Activated CD8-positive, alpha-beta T cell treated with anti-CD3 and anti-CD28 coated beads for 36 hours (primary cell): ENCODE measurements at regions of chr6 and their contacts with region 1.

Region 1: DNA sequence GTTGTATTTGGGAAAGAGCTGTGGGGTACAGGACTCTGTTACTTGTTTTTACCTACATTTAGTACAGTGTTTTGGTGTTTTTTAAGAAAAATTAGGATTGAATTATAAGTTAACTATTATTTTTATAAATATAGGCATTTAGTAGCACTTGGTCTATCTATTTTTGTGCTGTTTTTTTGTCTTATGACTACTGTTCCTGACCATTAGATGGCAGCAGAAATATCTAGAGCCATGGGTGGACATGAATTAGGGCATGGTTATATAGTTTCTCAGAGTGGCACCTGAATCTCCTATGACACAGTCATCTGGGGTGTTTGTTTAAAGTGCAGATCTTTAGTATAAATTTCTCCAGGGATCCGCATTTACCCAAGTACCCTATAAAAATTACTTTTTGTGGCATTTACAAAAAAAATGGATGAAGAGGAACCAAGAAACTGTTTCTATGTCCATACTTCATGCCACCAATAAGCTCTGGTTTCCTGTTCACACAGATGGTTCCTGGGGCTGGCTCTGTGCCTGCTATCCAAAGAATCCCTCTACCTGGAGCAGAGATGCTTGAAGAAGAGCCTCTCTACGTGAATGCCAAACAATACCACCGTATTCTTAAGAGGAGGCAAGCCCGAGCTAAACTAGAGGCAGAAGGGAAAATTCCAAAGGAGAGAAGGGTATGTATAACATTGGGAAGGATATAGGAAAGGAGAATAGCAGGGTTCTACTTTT is 19.8 kb downstream of the NFYA start:
- DNase-seq: no peak
- ATAC-seq: peak; percentile 47
- H3K4me3 Mint-ChIP-seq: no peak overlapping the region
- H3K27ac Mint-ChIP-seq: no peak overlapping the region
- H3K4me1 Mint-ChIP-seq: no peaks in the 10 kb centered on the region
- H3K27me3 Mint-ChIP-seq: no peaks in the 10 kb centered on the region
- CTCF ChIP-seq: peak; percentile 45

Region 2: GRCh38 chr6:41103847-41104246 is 11.3 kb after region 1 on chr6:
- CTCF ChIA-PET with region 1: interaction called, 11 read pairs
- POLR2A ChIA-PET with region 1: no interaction called
- intact Hi-C with region 1: no loop called
- DNase-seq: no peak
- ATAC-seq: no peak
- H3K4me3 Mint-ChIP-seq: no peak overlapping the region
- H3K27ac Mint-ChIP-seq: no peak overlapping the region
- H3K4me1 Mint-ChIP-seq: peaks cover 4% of the 10 kb centered on the region
- H3K27me3 Mint-ChIP-seq: no peaks in the 10 kb centered on the region
- CTCF ChIP-seq: no peak